Left cardiac atrium (tissue), 4 donors: ENCODE measurements at regions of chr17 and their contacts with region 1.

Region 1: GRCh38 chr17:8894673-8895578 is 27.5 kb upstream of the PIK3R6 start:
- DNase-seq: peak; percentile 43
- ATAC-seq: peak; percentile 77 to 80

Region 2: GRCh38 chr17:8798846-8799569 is 95.9 kb before region 1 on chr17 and contains the start of gene MFSD6L:
- intact Hi-C with region 1: loop called in 1 of 2 experiments (anchors 5 kb)
- DNase-seq: no peak
- ATAC-seq: peak in 1 of 2 donors; percentile 44
- total RNA-seq, gene MFSD6L: not detected

Region 3: DNA sequence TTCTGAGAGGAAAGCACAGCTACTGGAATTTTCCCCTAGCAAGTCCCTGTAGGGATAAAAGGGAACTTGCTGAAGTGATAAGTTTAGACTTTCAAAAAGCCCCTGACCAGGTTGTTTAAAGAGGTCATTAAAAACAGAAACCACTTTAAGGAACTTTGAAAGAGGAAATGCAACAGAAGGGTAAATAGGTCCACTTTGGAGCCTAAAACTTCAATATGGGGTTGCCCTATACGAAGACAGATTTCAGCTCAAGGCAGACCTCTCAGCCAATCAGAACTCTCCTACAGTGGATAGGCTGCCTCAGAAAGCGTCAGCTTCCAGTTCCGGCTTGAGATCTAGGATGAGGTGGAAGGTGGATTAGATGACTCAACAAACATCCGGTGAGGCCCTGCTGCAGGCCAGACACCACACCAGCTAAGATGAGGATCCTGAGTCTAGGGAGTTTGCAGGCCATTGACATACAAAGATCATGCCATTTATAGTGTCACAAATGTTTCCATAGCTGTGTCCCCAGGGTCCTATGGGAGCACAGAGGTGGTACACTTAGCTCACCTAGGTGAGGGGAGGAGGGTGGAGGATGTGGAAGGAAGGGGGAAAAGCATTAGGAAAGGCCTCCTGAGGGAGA is 87.9 kb before region 1 on chr17:
- intact Hi-C with region 1: loop called in 1 of 2 experiments (anchors 5 kb)
- DNase-seq: no peak
- ATAC-seq: peak in 1 of 2 donors; percentile 54

Region 4: GRCh38 chr17:8875957-8876356 is 19.0 kb before region 1 on chr17:
- intact Hi-C with region 1: no loop called
- DNase-seq: no peak
- ATAC-seq: no peak